Panc1 (cell line): ENCODE measurements at regions of chr6 and their contacts with region 1.

Region 1: DNA sequence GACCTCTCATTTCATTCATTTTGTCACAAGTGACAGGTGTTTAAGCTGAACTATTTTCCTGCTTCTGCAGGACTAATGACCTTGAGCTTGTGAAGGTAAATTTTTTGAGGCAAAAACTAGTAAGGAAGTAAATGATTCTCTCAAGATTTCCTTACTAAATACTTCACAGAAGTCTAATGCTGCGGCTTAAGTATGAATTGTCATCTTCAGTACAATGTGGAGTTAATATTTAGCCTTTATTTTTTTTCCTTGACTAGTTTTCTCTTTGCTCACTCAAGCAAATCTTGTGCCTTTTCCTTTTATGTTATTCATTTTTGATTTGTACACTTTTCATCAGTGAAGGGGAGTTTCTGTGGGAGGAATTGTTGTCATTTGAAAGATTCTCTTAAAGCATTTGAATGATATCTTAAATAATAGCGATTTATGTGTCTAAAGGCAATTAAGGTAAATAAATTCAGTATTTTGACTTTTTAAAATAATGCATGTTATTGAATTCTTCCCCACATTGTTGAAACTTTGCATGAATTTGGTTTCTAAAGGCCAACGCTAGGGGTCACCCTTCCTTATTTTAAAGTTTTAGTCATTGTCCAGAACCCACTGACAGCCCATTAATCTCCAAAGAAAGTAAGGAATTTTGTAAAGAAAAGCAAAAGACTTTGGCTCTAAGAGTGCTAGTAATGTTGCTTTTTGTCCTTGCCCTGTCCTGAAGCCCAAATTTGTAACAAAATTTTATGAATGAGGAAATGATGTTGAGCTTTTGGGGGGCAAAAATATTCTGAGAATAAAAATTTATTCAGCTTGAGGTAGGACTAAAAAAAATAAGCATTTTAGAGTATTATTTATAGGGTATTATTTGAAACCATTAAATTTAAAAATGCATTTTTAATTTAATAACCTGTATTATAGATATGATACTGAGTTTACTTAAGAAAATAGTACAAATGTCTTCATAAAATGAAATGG is 157.4 kb upstream of the LAMA2 start:
- DNase-seq: peak; percentile 2
- ATAC-seq: no peak
- H3K4me3 ChIP-seq: no peak overlapping the region
- H3K27ac ChIP-seq: no peak overlapping the region
- H3K4me1 ChIP-seq: no peaks in the 10 kb centered on the region; the same call in 1 of the 2 replicates
- H3K27me3 ChIP-seq: no peaks in the 10 kb centered on the region
- CTCF ChIP-seq: peak; percentile 72; the same call in 1 of the 2 replicates

Region 2: GRCh38 chr6:127855542-127856159 is 869.9 kb before region 1 on chr6:
- CTCF ChIA-PET with region 1: no interaction called
- POLR2A ChIA-PET with region 1: no interaction called
- in situ Hi-C with region 1: no loop called
- intact Hi-C with region 1: loop called (anchors 5 kb)
- DNase-seq: peak; percentile 35
- ATAC-seq: 0 out of 2 replicates have a peak, but pooled peaks have one; percentile 60
- H3K4me3 ChIP-seq: no peak overlapping the region
- H3K27ac ChIP-seq: no peak overlapping the region
- H3K4me1 ChIP-seq: no peaks in the 10 kb centered on the region
- H3K27me3 ChIP-seq: no peaks in the 10 kb centered on the region
- CTCF ChIP-seq: peak; percentile 62; the same call in 1 of the 2 replicates

Region 3: GRCh38 chr6:129130959-129131681 is 405.6 kb after region 1 on chr6:
- CTCF ChIA-PET with region 1: no interaction called
- POLR2A ChIA-PET with region 1: no interaction called
- in situ Hi-C with region 1: no loop called
- intact Hi-C with region 1: no loop called
- DNase-seq: no peak
- ATAC-seq: no peak
- H3K4me3 ChIP-seq: no peak overlapping the region
- H3K27ac ChIP-seq: no peak overlapping the region
- H3K4me1 ChIP-seq: no peaks in the 10 kb centered on the region
- H3K27me3 ChIP-seq: no peaks in the 10 kb centered on the region
- CTCF ChIP-seq: no peak

Region 4: DNA sequence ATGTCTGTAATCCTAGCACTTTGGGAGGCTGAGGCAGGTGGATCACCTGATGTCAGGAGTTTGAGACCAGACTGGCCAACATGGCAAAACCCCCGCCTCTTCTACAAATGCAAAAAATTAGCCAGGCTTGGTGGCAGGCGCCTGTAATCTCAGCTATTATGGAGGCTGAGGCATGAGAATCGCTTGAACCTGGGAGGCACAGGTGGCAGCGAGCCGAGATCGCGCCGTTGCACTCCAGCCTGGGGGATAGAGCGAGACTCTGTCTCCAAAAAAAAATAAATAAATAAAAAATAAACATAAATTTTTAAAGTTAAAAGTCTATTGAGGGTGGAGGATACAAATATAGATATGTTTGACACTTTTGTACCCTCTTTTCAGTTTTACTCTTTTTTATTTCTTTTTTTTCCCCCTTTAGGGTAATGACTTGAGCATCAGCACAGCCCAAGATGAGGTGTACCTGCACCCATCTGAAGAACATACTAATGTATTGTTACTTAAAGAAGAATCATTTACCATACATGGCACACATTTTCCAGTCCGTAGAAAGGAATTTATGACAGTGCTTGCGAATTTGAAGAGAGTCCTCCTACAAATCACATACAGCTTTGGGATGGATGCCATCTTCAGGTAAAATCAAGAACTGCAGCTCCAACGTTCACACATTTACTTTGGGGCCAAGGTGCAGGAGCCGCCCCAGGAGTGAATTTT is 526.3 kb after region 1 on chr6:
- CTCF ChIA-PET with region 1: no interaction called
- POLR2A ChIA-PET with region 1: no interaction called
- in situ Hi-C with region 1: no loop called
- intact Hi-C with region 1: loop called (anchors 10 kb)
- DNase-seq: peak; percentile 53
- ATAC-seq: peak; percentile 74; the same call in 1 of the 2 replicates
- H3K4me3 ChIP-seq: no peak overlapping the region
- H3K27ac ChIP-seq: no peak overlapping the region
- H3K4me1 ChIP-seq: peaks cover 5% of the 10 kb centered on the region; the same call in 1 of the 2 replicates
- H3K27me3 ChIP-seq: no peaks in the 10 kb centered on the region
- CTCF ChIP-seq: peak; percentile 90

Region 5: DNA sequence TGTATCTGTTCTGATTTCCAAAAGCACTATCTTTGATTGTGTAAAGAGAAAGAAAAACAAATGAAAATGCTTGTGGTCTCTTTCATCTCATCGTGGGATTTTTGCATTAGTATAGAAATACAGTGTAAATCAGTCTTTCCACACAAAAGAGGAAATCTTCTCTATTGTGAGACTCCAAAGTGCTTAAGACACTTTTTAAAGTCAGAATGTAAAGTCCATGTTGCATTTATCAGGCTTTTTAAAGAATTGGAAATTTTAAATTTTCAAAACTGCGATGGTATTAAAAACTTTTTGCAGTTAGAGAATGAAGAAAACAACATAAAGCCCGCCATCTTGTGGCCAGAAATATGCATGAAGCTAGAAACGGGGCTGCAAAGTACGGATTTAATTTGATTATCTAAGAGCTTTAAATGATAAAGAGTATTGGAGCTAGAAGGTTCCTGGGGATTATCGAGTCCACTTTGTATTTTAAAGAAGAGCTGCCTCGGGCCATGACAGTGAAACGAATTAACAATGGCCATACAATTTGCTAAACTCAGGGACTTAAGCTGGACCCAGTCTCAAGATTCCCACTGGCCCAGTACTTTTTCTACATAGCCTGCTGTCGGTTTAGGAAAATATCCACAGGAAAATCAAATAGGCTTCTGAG is 644.8 kb after region 1 on chr6:
- CTCF ChIA-PET with region 1: no interaction called
- POLR2A ChIA-PET with region 1: no interaction called
- in situ Hi-C with region 1: no loop called
- intact Hi-C with region 1: loop called (anchors 5 kb)
- DNase-seq: peak; percentile 20
- ATAC-seq: peak; percentile 65; the same call in 1 of the 2 replicates
- H3K4me3 ChIP-seq: no peak overlapping the region
- H3K27ac ChIP-seq: peak overlapping the region; percentile 74; the same call in 1 of the 2 replicates
- H3K4me1 ChIP-seq: peaks cover 16% of the 10 kb centered on the region; the same call in 1 of the 2 replicates
- H3K27me3 ChIP-seq: no peaks in the 10 kb centered on the region
- CTCF ChIP-seq: peak; percentile 74